Tibial artery (tissue), 4 donors: ENCODE measurements at regions of chr4 and their contacts with region 1.

Region 1: DNA sequence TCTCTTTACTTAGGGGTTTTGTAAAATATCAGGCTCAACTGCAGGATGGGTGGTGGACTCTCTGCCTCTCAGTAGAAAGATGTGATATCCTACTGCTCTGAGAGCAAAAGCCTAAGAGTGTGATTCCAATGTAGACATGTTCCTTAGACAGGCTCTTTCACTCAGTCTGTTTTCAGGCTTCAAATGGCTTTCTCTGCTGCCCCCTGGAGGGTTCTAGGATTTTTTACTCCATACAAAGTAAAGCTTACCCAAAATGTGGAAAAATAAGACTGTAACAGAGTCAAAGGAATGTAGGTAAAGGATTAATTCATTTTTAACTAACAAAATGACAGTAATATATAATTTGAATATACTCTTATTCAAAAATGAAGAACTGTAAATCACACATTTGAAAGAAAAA is 32.1 kb downstream of the ZGRF1 start:
- DNase-seq: no peak
- H3K4me3 ChIP-seq: no peak overlapping the region
- H3K27ac ChIP-seq: no peak overlapping the region
- H3K4me1 ChIP-seq: no peaks in the 10 kb centered on the region
- H3K27me3 ChIP-seq: no peaks in the 10 kb centered on the region
- CTCF ChIP-seq: peak; percentile 47 to 56

Region 2: DNA sequence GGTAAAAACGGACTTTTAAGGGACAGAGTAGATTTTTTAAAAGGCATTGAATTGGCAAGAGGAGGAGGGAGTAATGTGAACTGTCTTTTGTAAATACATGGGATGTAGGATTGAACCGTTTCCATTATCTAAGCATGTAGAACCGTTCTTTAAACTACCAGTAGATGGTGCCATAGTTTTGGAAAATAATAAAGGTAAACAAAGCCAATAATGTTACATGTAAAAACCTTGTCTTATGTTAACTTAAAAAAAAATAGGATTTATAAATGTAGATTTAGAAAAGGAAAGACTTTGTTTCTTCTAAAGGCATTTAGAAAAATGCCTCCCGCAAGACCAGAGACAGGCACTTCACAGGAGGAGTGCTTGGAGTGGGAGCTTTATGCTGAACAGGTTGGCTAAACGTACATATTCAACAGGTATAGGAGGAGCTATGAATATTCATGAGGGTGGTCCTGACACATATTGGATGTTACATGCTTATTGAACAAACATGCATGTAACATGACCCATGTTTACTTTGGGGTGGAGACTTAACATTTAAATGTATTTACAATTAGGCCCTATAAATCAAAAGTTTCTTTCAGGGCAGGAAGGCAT is 504.8 kb before region 1 on chr4:
- intact Hi-C with region 1: loop called (anchors 10 kb)
- DNase-seq: no peak
- H3K4me3 ChIP-seq: no peak overlapping the region
- H3K27ac ChIP-seq: no peak overlapping the region
- H3K4me1 ChIP-seq: no peaks in the 10 kb centered on the region
- H3K27me3 ChIP-seq: no peaks in the 10 kb centered on the region
- CTCF ChIP-seq: peak; percentile 57 to 70

Region 3: GRCh38 chr4:112327965-112328733 is 276.4 kb before region 1 on chr4:
- intact Hi-C with region 1: loop called (anchors 10 kb)
- DNase-seq: no peak
- H3K4me3 ChIP-seq: no peak overlapping the region
- H3K27ac ChIP-seq: no peak overlapping the region
- H3K4me1 ChIP-seq: no peaks in the 10 kb centered on the region
- H3K27me3 ChIP-seq: no peaks in the 10 kb centered on the region
- CTCF ChIP-seq: peak in 1 of 2 experiments; percentile 18

Region 4: GRCh38 chr4:112626228-112626627 is 21.6 kb after region 1 on chr4:
- intact Hi-C with region 1: no loop called
- DNase-seq: no peak
- H3K4me3 ChIP-seq: no peak overlapping the region
- H3K27ac ChIP-seq: no peak overlapping the region
- H3K4me1 ChIP-seq: no peaks in the 10 kb centered on the region
- H3K27me3 ChIP-seq: no peaks in the 10 kb centered on the region
- CTCF ChIP-seq: no peak